ENCODE measurements at regions of chr17 and their contacts with region 1.

Region 1: DNA sequence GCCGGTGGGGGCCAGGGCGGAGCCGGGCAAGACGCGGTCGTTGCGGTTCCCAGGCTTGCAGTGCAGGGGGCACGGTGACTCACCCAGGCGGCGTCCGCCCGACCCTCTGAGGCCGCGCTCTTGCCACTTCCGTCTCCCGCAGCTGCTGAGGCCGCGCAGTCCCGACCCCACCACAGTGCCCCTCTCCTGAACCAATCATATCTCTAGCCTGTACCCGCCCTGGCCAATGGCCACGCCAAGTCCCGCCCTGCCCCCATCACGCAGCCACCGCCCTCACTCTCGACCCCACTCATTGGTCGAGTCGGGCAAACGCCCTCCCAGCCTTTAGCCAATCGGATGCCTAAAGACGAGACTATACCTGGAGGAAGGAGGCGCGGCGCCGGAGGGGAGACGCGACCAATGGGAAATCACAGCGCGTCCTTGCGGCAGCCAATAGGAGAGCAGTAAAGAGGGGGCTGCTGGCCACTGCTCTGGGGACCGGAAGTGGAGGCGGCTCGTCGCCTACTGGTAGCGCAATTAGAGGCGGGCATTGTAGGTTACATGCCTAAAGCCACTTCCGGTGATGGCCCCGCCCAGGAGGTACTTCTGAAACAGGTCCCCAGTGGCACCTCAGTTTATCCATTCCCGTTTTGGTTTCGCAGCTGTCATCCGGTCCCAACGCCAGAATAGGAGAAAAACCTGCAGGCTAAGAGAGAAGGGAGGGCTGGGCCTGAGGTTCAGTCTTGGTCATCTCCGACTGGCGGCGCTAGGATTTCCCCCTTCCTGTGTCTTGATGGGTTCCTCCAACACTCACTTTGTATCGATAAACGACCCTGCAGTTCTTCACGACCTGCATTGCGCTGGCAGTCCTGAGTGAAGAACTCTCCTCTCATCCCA is 3.5 kb upstream of the MTMR4 start:
- DNase-seq: peak; percentile 100
- ATAC-seq: peak; percentile 89
- H3K4me3 ChIP-seq: peak overlapping the region; percentile 76 to 93 (median 83)
- H3K27ac ChIP-seq: peak overlapping the region; percentile 91 to 99 (median 93)
- H3K4me1 ChIP-seq: peaks cover 30 to 37% of the 10 kb centered on the region in 2 donors
- H3K27me3 ChIP-seq: no peaks in the 10 kb centered on the region
- CTCF ChIP-seq: no peak
- POLR2A ChIP-seq: peak; percentile 45 to 68

Region 2: GRCh38 chr17:58303971-58304725 is 213.8 kb before region 1 on chr17:
- in situ Hi-C with region 1: no loop called
- intact Hi-C with region 1: no loop called
- DNase-seq: no peak
- ATAC-seq: no peak
- H3K4me3 ChIP-seq: no peak overlapping the region
- H3K27ac ChIP-seq: no peak overlapping the region
- H3K4me1 ChIP-seq: no peaks in the 10 kb centered on the region
- H3K27me3 ChIP-seq: no peaks in the 10 kb centered on the region
- CTCF ChIP-seq: peak in 4 of 5 experiments; percentile 44 to 61 (median 51)
- POLR2A ChIP-seq: no peak

Region 3: DNA sequence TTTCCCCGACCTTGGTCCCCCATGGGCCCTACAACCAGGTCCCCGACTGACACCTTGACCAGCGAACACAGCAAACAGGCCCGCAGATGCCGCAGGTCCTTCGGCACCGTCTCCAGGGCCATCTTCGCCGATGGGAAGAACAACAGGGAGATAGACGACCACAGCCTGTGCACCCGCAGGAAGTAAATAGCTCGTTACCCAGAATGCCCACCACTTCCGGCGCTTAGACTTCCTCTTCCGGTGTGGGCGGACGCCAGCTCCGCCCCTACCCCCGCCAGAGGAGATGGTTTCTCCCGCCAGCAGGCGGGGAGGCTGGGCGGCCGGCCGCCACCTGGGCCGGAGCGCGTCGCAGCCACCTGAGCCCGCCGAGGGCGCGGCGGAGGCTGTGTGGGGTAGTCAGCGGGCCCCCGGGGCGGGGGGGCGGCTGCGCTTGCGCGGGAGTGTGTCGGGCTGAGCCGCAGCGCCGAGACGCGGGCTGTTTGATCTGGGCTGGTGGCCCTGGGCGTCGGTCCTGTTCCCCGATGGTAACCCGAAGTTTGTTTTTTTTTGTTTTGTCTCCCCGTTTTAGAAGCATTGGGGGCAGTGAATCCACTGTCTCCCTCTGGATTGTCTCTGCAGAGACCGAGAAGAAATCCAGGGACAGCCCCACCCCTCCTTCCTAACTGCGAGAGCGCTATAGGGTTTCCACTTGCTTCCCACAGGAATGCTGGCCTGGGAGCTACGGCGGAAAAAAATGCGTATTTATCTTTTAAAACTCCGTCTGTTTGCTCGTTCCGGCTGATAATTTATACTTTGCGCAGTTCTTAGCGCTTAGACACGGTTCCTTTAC is 165.7 kb before region 1 on chr17 and contains the start of gene SUPT4H1:
- in situ Hi-C with region 1: no loop called
- intact Hi-C with region 1: loop called (anchors 1 kb)
- DNase-seq: peak; percentile 76 to 86
- ATAC-seq: peak; percentile 96 to 98
- H3K4me3 ChIP-seq: peak within 1 kb of the TSS; percentile 63 to 96 (median 92)
- H3K27ac ChIP-seq: peak within 1 kb of the TSS; percentile 83 to 96 (median 88)
- H3K4me1 ChIP-seq: peaks cover 15 to 19% of the 10 kb centered on the region in 2 donors
- H3K27me3 ChIP-seq: no peaks in the 10 kb centered on the region
- CTCF ChIP-seq: peak in 1 of 5 experiments; percentile 33
- POLR2A ChIP-seq: peak; percentile 73 to 75
- total RNA-seq, gene SUPT4H1: 39.6 to 49.0 (median 41.1) TPM

Region 4: DNA sequence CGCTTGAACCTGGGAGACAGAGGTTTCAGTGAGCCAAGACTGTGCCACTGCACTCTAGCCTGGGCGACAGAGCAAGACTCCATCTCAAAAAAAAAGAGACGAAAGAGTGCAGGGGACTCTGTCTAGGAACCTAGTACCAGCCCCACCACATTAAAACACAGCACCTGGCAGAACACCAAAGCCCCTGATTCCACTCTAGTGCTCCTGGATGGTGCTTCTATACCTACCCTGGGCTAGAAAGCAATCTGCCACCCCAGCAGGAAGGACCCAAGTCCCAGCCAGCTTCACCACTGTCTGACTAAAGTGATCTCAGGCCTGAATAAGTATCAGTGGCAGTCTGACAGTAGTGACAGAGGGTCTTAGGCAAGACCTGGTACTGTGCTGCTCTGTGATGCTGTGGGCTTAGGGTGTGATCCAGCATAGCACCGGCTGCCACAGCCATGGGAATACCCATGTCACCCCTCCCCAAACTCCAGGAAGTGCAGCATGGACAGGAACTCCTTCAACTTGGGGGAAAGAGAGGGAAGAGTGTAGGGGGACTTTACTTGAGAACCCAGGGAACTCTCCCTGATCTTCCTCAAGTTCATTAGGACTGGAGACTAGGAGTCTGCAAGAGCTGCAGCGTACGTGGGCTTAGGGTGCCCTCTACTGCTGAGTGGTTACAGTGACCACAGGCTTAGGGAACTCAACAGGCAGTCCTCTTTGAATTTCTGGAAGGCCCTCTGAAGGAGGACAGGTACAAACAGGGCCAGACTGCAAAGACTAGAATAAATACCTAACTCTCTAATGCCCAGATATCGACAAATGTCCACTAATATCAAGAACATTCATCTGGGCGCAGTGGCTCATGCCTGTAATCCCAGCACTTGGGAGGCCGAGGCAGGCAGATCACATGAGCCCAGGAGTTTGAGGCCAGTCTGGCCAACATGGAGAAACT is 70.7 kb before region 1 on chr17:
- in situ Hi-C with region 1: no loop called
- intact Hi-C with region 1: no loop called
- DNase-seq: peak in 1 of 2 donors; percentile 5
- ATAC-seq: no peak
- H3K4me3 ChIP-seq: no peak overlapping the region
- H3K27ac ChIP-seq: no peak overlapping the region
- H3K4me1 ChIP-seq: no peaks in the 10 kb centered on the region
- H3K27me3 ChIP-seq: no peaks in the 10 kb centered on the region
- CTCF ChIP-seq: peak in 2 of 5 experiments; percentile 25 to 28
- POLR2A ChIP-seq: no peak

Region 5: GRCh38 chr17:58631523-58632323 is 113.8 kb after region 1 on chr17:
- in situ Hi-C with region 1: no loop called
- intact Hi-C with region 1: loop called (anchors 1 kb)
- DNase-seq: peak; percentile 78 to 91
- ATAC-seq: peak; percentile 93 to 95
- H3K4me3 ChIP-seq: peak overlapping the region; percentile 32 to 52 (median 50)
- H3K27ac ChIP-seq: peak overlapping the region; percentile 71 to 79 (median 73)
- H3K4me1 ChIP-seq: no peaks in the 10 kb centered on the region
- H3K27me3 ChIP-seq: no peaks in the 10 kb centered on the region
- CTCF ChIP-seq: no peak
- POLR2A ChIP-seq: peak; percentile 91 to 96

Region 6: DNA sequence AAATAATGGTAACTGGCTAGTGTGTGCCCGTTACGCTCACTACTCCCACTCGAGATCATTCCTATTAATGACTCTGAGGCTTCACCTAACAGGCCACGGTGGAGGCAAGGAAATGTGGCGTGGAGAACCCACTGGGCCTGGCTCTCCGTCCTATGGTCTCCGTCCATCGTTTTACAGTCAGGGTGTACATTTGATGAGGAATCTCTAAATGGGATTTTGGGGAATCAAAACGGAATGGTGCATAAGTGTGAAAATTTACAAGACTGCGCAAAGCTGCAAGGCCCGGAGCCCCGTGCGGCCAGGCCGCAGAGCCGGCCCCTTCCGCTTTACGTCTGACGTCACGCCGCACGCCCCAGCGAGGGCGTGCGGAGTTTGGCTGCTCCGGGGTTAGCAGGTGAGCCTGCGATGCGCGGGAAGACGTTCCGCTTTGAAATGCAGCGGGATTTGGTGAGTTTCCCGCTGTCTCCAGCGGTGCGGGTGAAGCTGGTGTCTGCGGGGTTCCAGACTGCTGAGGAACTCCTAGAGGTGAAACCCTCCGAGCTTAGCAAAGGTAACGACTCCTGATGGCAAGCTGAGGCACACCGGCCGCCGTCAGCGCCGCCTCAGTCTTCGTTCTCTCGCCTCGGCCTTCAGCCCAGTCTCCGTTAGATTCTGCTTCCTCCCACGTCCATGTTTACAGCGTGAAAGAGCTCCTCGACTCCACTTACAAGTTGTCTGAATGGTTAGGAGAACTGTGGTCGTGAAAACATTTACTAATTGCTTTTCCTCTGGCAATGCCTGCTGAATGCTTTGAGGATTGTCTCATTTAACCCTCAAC is 174.5 kb after region 1 on chr17 and contains the start of gene RAD51C:
- in situ Hi-C with region 1: loop called in 1 of 4 experiments (anchors 10 kb)
- intact Hi-C with region 1: loop called (anchors 1 kb)
- DNase-seq: peak; percentile 53 to 67
- ATAC-seq: peak; percentile 91 to 95
- H3K4me3 ChIP-seq: peak within 1 kb of the TSS; percentile 65 to 80 (median 79)
- H3K27ac ChIP-seq: peak within 1 kb of the TSS; percentile 74 to 79 (median 76)
- H3K4me1 ChIP-seq: peaks cover 10 to 12% of the 10 kb centered on the region in 2 donors
- H3K27me3 ChIP-seq: no peaks in the 10 kb centered on the region
- CTCF ChIP-seq: no peak
- POLR2A ChIP-seq: peak; percentile 38 to 39
- total RNA-seq, gene RAD51C: 6.4 to 18.7 (median 12.5) TPM

Region 7: GRCh38 chr17:59010026-59010425 is 492.1 kb after region 1 on chr17:
- in situ Hi-C with region 1: loop called (anchors 10 to 25 kb)
- intact Hi-C with region 1: loop called (anchors 1 kb)
- DNase-seq: no peak
- ATAC-seq: no peak
- H3K4me3 ChIP-seq: no peak overlapping the region
- H3K27ac ChIP-seq: no peak overlapping the region
- H3K4me1 ChIP-seq: no peaks in the 10 kb centered on the region
- H3K27me3 ChIP-seq: no peaks in the 10 kb centered on the region
- CTCF ChIP-seq: no peak
- POLR2A ChIP-seq: no peak

Region 8: DNA sequence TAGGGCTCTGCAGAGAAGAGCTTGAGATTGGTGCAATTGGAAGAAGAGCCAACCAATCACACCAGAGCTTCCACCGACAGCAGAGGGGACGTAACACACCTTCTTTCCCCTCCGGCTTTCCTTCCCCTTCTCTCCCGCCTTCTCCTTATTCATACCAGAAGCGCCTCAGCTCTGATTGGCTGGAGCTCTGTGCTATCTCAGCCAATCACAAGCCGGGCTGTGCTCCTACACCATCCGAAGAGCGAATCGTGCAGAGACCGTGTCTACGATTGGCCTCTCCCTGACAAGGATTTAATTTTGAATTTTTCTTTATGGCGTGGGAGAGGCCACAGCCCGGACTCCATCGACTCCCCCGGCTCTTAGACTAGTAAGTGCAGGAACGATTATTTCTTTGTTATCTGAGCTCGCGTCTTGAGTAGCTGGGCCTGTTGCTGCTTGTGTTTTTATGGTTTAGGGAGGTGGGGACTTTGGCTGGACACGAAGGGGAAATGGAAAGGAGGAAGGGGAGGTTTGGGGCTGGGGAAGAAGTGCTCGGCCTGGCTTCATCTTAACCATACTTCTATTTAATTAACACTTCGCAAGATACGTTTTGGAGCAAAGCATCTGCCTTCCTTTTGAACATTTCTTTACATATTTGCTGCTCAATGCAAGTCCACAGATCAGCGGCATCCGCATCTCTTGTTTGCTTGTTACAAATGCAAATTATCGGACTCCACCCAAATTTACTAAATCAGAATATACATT is 637.6 kb after region 1 on chr17 and contains the start of gene PRR11:
- in situ Hi-C with region 1: no loop called
- intact Hi-C with region 1: loop called (anchors 5 kb)
- DNase-seq: peak; percentile 95 to 97
- ATAC-seq: peak; percentile 94 to 97
- H3K4me3 ChIP-seq: peak within 1 kb of the TSS; percentile 75 to 94 (median 86)
- H3K27ac ChIP-seq: peak within 1 kb of the TSS; percentile 60 to 74 (median 71)
- H3K4me1 ChIP-seq: peaks cover 9 to 12% of the 10 kb centered on the region in 2 donors
- H3K27me3 ChIP-seq: no peaks in the 10 kb centered on the region
- CTCF ChIP-seq: no peak
- POLR2A ChIP-seq: no peak
- total RNA-seq, gene PRR11: 0.20 to 7.9 (median 0.53) TPM in 3 of 4 donors, not detected in the other

Measured in gastrocnemius medialis (tissue), 4 donors.